ENCODE measurements at regions of chr4 and their contacts with region 1.

Region 1: DNA sequence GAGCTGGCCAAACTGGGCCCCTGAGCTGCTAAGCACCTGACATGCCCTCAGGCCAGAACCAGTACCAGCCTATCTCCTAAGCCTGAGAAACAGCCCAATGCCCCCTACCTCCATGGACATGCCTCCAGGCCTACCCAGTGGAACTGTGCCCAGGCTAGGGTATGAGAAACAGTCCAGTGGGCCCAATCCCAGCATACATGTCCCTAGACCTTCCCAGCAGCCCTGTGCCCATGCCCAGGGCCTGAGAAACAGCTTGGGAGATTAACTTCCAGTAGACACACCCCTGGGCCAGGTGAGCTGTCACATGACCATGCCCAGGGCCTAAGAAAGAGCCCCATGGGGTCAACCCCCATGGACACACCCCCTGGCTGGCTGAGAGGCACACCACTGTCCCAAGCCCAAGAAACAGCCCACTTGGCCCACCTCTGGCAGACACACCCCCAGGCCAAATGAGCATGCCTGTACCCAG is 78.8 kb downstream of the CBR4 start:
- DNase-seq: no peak
- ATAC-seq: peak; percentile 9

Region 2: DNA sequence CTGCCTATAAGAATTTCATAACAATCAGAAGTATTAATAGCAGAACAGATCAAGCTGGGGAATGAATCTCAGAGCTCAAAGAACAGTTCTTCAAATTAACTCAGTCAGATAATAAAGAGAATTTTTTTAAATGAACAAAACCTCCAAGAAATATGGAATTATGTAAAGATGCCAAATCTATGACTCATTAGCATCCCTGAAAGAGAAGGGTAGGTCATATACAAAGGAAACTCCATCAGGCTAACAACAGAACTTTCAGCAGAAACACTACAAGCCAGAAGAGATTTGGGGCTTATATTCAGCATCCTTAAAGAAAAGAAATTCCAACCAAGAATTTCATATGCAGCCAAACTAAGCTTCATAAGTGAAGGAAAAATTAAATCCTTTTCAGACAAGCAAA is 50.2 kb after region 1 on chr4:
- intact Hi-C with region 1: loop called in 1 of 2 experiments (anchors 10 kb)
- DNase-seq: no peak
- ATAC-seq: no peak

Region 3: GRCh38 chr4:169398316-169398715 is 467.1 kb after region 1 on chr4:
- intact Hi-C with region 1: no loop called
- DNase-seq: no peak
- ATAC-seq: no peak

Measured in left colon (tissue), 2 donors.